IMR-90 (cell line): ENCODE measurements at regions of chr19 and their contacts with region 1.

Region 1: DNA sequence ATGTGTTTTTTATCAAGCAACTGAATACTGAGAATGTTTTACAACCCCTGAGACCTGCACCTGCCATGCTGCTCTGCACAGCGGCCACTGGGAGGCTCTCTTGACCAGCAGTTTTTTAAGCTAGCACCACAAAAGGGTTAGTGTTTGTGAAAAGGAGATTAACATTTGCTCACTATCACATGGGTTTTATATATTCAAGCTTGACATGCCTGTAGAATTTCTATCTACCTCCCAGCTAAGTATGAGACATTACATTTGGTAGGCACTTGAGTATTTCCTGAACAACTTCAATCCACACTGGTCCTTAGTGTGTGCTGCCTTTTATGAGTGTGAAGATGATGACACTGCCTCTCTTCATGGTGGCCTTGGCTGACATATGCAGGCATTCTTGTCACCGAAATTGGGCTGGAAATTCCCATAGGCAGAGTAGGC is 1238.9 kb downstream of the UQCRFS1 start:
- DNase-seq: no peak
- ATAC-seq: no peak
- H3K4me3 ChIP-seq: no peak overlapping the region
- H3K27ac ChIP-seq: no peak overlapping the region
- H3K4me1 ChIP-seq: no peaks in the 10 kb centered on the region
- H3K27me3 ChIP-seq: no peaks in the 10 kb centered on the region
- CTCF ChIP-seq: peak; percentile 29; the same call in 1 of the 2 replicates
- POLR2A ChIP-seq: no peak
- RAD21 ChIP-seq: peak; percentile 36

Region 2: DNA sequence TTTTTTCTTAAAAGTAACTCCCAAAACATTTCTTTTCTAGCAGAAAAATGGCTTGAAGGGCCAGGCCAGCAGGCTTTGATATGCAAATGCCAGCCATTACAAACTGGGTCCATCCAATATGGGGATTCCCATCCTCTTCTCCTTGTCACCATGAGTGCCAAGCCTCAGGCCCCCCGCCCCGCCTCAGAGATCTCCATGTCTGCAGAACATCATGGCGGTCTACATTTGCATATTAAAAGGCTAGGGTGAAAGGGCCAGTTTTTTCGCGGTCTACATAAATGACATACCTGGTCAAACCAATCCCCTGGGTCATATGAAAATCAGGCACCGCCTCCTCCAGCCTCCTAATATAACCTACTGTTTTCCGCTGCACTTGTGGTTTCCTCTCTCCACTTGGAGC is 88.7 kb before region 1 on chr19:
- CTCF ChIA-PET with region 1: no interaction called
- POLR2A ChIA-PET with region 1: no interaction called
- dilution Hi-C with region 1: no loop called
- in situ Hi-C with region 1: no loop called
- intact Hi-C with region 1: no loop called
- DNase-seq: no peak
- ATAC-seq: no peak
- H3K4me3 ChIP-seq: no peak overlapping the region
- H3K27ac ChIP-seq: no peak overlapping the region
- H3K4me1 ChIP-seq: no peaks in the 10 kb centered on the region
- H3K27me3 ChIP-seq: no peaks in the 10 kb centered on the region
- CTCF ChIP-seq: no peak
- POLR2A ChIP-seq: no peak
- RAD21 ChIP-seq: no peak

Region 3: GRCh38 chr19:28710278-28710677 is 736.2 kb after region 1 on chr19:
- CTCF ChIA-PET with region 1: interaction called, 3 read pairs
- POLR2A ChIA-PET with region 1: no interaction called
- dilution Hi-C with region 1: no loop called
- in situ Hi-C with region 1: loop called (anchors 25 kb)
- intact Hi-C with region 1: loop called (anchors 5 kb)
- DNase-seq: peak; percentile 67
- ATAC-seq: peak; percentile 59; the same call in 1 of the 2 replicates
- H3K4me3 ChIP-seq: no peak overlapping the region
- H3K27ac ChIP-seq: no peak overlapping the region
- H3K4me1 ChIP-seq: no peaks in the 10 kb centered on the region
- H3K27me3 ChIP-seq: no peaks in the 10 kb centered on the region
- CTCF ChIP-seq: peak; percentile 70
- POLR2A ChIP-seq: no peak
- RAD21 ChIP-seq: peak; percentile 74